ENCODE measurements at regions of chr6 and their contacts with region 1.

Region 1: GRCh38 chr6:145814501-145815308 is at the start of gene FBXO30:
- DNase-seq: peak; percentile 75
- ATAC-seq: peak; percentile 88
- H3K4me3 ChIP-seq: peak within 1 kb of the TSS; percentile 82
- H3K27ac ChIP-seq: peak within 1 kb of the TSS; percentile 63
- H3K4me1 ChIP-seq: peaks cover 33% of the 10 kb centered on the region
- H3K27me3 ChIP-seq: no peaks in the 10 kb centered on the region
- CTCF ChIP-seq: no peak
- total RNA-seq, gene FBXO30: 2.5 and 3.1 TPM in 2 replicates

Region 2: DNA sequence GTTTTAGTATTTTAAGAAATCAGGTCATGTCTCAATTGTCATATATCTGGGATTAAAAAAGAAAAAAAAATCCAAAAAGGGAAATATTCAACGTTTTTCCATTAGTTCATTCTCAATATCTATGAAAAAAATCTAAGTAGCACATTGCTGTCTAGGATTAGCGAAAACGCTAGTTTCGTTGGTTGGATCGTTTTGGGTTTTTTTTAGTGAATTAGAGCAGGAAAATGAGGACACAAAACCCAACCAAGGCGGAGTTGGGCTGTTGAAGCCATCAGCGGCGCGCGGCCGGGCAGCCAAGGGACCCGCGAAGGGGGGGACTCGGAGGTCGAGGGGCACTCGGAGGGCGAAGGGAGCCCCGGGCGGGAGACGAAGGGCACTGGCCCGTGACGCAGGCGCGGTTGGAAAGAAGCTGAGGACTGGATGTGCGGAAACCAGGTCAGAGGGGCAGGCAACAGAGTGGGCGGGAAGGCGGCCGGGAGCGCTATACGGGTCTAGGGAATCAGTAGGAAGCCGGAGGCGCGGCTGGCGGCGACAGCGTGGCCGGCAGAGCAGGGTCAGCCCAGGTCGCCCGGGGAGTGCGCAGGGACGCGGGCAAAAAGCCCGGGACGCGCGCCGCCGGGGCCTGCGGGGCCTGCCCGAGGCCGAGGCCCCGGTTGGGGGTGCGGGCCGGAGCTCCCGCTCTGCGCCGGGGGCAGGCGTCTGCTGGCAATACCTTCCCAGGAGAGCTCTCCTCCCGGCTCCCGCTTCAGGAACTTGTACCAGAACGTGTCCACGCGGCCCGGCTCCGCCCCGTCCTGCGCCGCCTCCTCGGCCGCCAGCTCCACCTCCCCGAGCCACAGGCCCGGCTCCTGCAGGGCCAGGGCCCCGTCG is 80.0 kb before region 1 on chr6:
- CTCF ChIA-PET with region 1: no interaction called
- POLR2A ChIA-PET with region 1: no interaction called
- intact Hi-C with region 1: loop called (anchors 2 kb)
- DNase-seq: peak; percentile 80
- ATAC-seq: peak; percentile 93
- H3K4me3 ChIP-seq: peak overlapping the region; percentile 81
- H3K27ac ChIP-seq: peak overlapping the region; percentile 84
- H3K4me1 ChIP-seq: peaks cover 13% of the 10 kb centered on the region; the same call in 1 of the 2 replicates
- H3K27me3 ChIP-seq: no peaks in the 10 kb centered on the region
- CTCF ChIP-seq: no peak

Region 3: DNA sequence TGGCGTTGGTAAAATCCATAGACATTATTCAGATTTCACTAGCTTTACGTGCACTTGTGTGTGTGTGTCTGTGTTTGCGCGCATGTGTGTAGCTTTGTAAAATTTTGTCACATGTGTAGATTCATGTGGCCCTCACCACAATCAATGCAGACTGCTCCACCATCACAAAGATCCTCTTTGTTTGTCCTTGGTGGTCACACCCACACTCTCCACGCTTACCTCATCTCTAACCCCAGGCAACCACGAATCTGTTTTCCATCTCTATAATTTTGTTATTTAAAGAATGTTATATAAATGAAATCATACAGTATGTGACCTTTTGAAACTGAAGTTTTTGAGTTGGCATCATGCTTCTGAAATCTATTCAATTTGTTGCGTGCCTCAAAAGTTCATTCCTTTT is 272.7 kb after region 1 on chr6:
- CTCF ChIA-PET with region 1: no interaction called
- POLR2A ChIA-PET with region 1: no interaction called
- intact Hi-C with region 1: no loop called
- DNase-seq: no peak
- ATAC-seq: no peak
- H3K4me3 ChIP-seq: no peak overlapping the region
- H3K27ac ChIP-seq: no peak overlapping the region
- H3K4me1 ChIP-seq: no peaks in the 10 kb centered on the region
- H3K27me3 ChIP-seq: peaks cover 8% of the 10 kb centered on the region; the same call in 1 of the 2 replicates
- CTCF ChIP-seq: no peak